HepG2 (cell line): ENCODE measurements at regions of chr2 and their contacts with region 1.

Region 1: GRCh38 chr2:116952254-116952653 is 862.2 kb upstream of the DDX18 start:
- DNase-seq: no peak
- ATAC-seq: no peak
- H3K4me3 ChIP-seq: no peak overlapping the region
- H3K27ac ChIP-seq: no peak overlapping the region
- H3K4me1 ChIP-seq: no peaks in the 10 kb centered on the region
- H3K27me3 ChIP-seq: no peaks in the 10 kb centered on the region
- CTCF ChIP-seq: no peak
- EP300 ChIP-seq: no peak
- POLR2A ChIP-seq: no peak
- RAD21 ChIP-seq: no peak

Region 2: GRCh38 chr2:116510158-116510557 is 442.1 kb before region 1 on chr2:
- CTCF ChIA-PET with region 1: no interaction called
- POLR2A ChIA-PET with region 1: no interaction called
- in situ Hi-C with region 1: no loop called
- intact Hi-C with region 1: loop called (anchors 5 kb)
- DNase-seq: peak; percentile 14
- ATAC-seq: peak; percentile 74
- H3K4me3 ChIP-seq: no peak overlapping the region
- H3K27ac ChIP-seq: no peak overlapping the region
- H3K4me1 ChIP-seq: no peaks in the 10 kb centered on the region
- H3K27me3 ChIP-seq: no peaks in the 10 kb centered on the region
- CTCF ChIP-seq: peak; percentile 52
- EP300 ChIP-seq: no peak
- POLR2A ChIP-seq: no peak
- RAD21 ChIP-seq: no peak

Region 3: GRCh38 chr2:116917196-116917595 is 35.1 kb before region 1 on chr2:
- CTCF ChIA-PET with region 1: no interaction called
- POLR2A ChIA-PET with region 1: no interaction called
- in situ Hi-C with region 1: no loop called
- intact Hi-C with region 1: no loop called
- DNase-seq: no peak
- ATAC-seq: no peak
- H3K4me3 ChIP-seq: no peak overlapping the region
- H3K27ac ChIP-seq: no peak overlapping the region
- H3K4me1 ChIP-seq: no peaks in the 10 kb centered on the region
- H3K27me3 ChIP-seq: no peaks in the 10 kb centered on the region
- CTCF ChIP-seq: no peak
- EP300 ChIP-seq: no peak
- POLR2A ChIP-seq: no peak
- RAD21 ChIP-seq: no peak